SK-N-SH (cell line): ENCODE measurements at regions of chr5 and their contacts with region 1.

Region 1: GRCh38 chr5:56270568-56271392 is 37.6 kb upstream of the ANKRD55 start:
- DNase-seq: peak; percentile 72
- H3K4me3 ChIP-seq: no peak overlapping the region; a peak in 1 of 4 replicates
- H3K27ac ChIP-seq: peak overlapping the region; percentile 1 to 90; a peak in 3 of 4 replicates
- H3K4me1 ChIP-seq: peaks cover 10 to 24% of the 10 kb centered on the region in 2 experiments; a peak in 3 of 4 replicates
- H3K27me3 ChIP-seq: no peaks in the 10 kb centered on the region
- CTCF ChIP-seq: peak; percentile 99
- EP300 ChIP-seq: peak in 1 of 2 experiments; percentile 59; a peak in 2 of 4 replicates
- RAD21 ChIP-seq: peak; percentile 100

Region 2: DNA sequence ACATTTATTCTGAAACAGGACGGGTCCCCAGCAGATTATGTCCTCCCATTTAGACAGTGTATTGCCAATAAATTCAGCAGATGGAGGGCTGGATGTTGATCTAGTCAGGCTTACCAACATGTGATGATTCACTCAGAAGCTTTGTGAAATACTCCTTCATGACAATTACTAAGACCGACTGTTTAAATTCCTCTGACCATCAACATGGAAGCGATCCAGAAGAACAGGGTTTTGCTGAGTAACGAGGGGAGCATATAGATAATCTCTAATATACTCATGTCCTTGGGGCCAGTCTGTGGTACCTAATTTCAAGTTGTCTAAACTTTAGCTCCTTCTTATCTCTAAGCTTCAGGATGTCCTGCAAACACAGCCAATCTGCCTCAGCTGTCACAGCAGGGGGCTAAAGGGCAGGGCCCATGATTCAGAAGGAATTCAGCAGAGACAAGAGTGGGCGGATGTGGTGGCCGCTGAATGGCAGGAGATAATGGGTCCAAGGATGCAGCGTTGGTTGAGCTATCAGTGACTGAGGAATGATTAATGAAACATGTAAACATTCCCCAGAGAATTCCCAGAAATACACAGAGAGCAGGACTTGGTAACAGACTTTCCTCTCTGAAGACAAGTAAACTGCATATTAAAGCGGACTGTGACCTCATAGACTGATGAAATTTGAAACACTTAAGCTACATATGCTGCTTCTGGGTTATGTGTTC is 147.1 kb before region 1 on chr5:
- CTCF ChIA-PET with region 1: no interaction called
- POLR2A ChIA-PET with region 1: no interaction called
- DNase-seq: no peak
- H3K4me3 ChIP-seq: peak overlapping the region in 1 of 2 experiments; percentile 4; a peak in 1 of 4 replicates
- H3K27ac ChIP-seq: peak overlapping the region; percentile 67 to 97; a peak in 3 of 4 replicates
- H3K4me1 ChIP-seq: peaks cover 13 to 17% of the 10 kb centered on the region in 2 experiments; a peak in 3 of 4 replicates
- H3K27me3 ChIP-seq: no peaks in the 10 kb centered on the region
- CTCF ChIP-seq: no peak
- EP300 ChIP-seq: peak in 1 of 2 experiments; percentile 87; a peak in 2 of 4 replicates
- RAD21 ChIP-seq: no peak

Region 3: DNA sequence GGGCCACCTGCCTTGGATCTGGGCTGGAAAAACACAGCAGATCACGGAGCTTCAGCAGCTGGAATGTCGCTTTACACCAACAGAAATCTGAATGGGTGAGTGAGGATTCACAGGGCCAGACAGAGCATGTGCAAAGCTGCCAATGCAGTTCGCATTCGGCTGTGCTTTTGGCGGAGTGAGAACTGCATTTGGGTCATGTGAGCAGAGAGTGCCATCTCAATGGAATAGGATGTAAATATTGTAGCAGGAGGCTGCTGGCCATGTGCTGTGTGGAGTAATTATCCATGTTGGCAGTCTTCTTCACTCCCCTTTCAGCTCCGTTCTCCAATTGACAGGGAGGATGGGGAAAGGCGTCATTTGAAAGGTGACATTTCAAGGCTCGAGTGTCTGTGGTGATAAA is 37.5 kb before region 1 on chr5 and contains the start of gene ANKRD55:
- CTCF ChIA-PET with region 1: no interaction called
- POLR2A ChIA-PET with region 1: no interaction called
- DNase-seq: peak; percentile 30
- H3K4me3 ChIP-seq: no peak within 1 kb of the TSS
- H3K27ac ChIP-seq: no peak within 1 kb of the TSS
- H3K4me1 ChIP-seq: peaks cover 0 to 5% of the 10 kb centered on the region in 2 experiments; a peak in 1 of 4 replicates
- H3K27me3 ChIP-seq: 0 out of 2 replicates have a peak, but pooled peaks cover 5% of the 10 kb centered on the region
- CTCF ChIP-seq: no peak
- EP300 ChIP-seq: no peak
- RAD21 ChIP-seq: no peak
- polyA plus RNA-seq, gene ANKRD55: not detected in 2 replicates

Region 4: GRCh38 chr5:56282216-56282615 is 11.4 kb after region 1 on chr5:
- CTCF ChIA-PET with region 1: interaction called, 18 read pairs
- POLR2A ChIA-PET with region 1: no interaction called
- DNase-seq: no peak
- H3K4me3 ChIP-seq: no peak overlapping the region
- H3K27ac ChIP-seq: peak overlapping the region; percentile 4 to 14; a peak in 1 of 4 replicates
- H3K4me1 ChIP-seq: peaks cover 34 to 44% of the 10 kb centered on the region in 2 experiments
- H3K27me3 ChIP-seq: no peaks in the 10 kb centered on the region
- CTCF ChIP-seq: no peak
- EP300 ChIP-seq: no peak
- RAD21 ChIP-seq: no peak

Region 5: DNA sequence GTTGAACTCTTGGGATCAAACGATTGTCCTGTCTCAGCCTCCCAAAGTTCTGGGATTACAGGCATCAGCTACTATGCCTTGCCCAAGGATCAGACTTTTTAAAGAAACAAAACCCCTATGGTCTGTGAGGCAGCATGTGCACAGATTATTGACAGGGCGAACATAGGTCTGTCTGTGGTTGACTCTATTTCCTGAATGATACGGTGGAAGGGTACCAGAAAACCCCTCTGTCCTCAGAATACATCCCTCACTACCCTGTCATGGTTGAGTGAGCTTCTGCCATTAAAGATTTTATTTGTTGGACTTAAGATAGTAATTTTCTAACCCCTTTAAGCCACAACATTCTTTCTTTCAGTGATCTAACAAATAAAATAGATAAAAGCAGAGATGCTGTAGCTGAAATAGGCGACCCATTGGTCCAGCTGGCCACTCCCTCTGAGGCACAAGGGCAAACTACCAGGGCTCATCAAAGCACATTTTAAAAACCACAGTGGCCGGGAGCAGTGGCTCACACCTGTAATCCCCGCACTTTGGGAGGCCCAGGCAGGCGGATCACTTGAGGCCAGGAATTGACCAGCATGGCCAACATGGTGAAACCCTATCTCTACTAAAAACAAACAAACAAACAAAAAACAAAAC is 47.3 kb after region 1 on chr5:
- CTCF ChIA-PET with region 1: interaction called, 11 read pairs
- POLR2A ChIA-PET with region 1: no interaction called
- DNase-seq: no peak
- H3K4me3 ChIP-seq: no peak overlapping the region
- H3K27ac ChIP-seq: no peak overlapping the region
- H3K4me1 ChIP-seq: peaks cover 7 to 10% of the 10 kb centered on the region in 2 experiments; a peak in 2 of 4 replicates
- H3K27me3 ChIP-seq: no peaks in the 10 kb centered on the region
- CTCF ChIP-seq: no peak
- EP300 ChIP-seq: no peak
- RAD21 ChIP-seq: no peak

Region 6: GRCh38 chr5:56712895-56713591 is 442.3 kb after region 1 on chr5:
- CTCF ChIA-PET with region 1: interaction called, 10 read pairs
- POLR2A ChIA-PET with region 1: interaction called, 5 read pairs
- DNase-seq: peak; percentile 75
- H3K4me3 ChIP-seq: no peak overlapping the region
- H3K27ac ChIP-seq: peak overlapping the region in 1 of 2 experiments; percentile 99; a peak in 2 of 4 replicates
- H3K4me1 ChIP-seq: peaks cover 0 to 37% of the 10 kb centered on the region in 2 experiments; a peak in 2 of 4 replicates
- H3K27me3 ChIP-seq: no peaks in the 10 kb centered on the region
- CTCF ChIP-seq: no peak
- EP300 ChIP-seq: peak in 1 of 2 experiments; percentile 97; a peak in 2 of 4 replicates
- RAD21 ChIP-seq: peak; percentile 44

Region 7: GRCh38 chr5:56827049-56827448 is 556.3 kb after region 1 on chr5:
- CTCF ChIA-PET with region 1: interaction called, 17 read pairs
- POLR2A ChIA-PET with region 1: interaction called, 4 read pairs
- DNase-seq: no peak
- H3K4me3 ChIP-seq: no peak overlapping the region
- H3K27ac ChIP-seq: peak overlapping the region in 1 of 2 experiments; percentile 53; a peak in 2 of 4 replicates
- H3K4me1 ChIP-seq: peaks cover 0 to 70% of the 10 kb centered on the region in 2 experiments; a peak in 3 of 4 replicates
- H3K27me3 ChIP-seq: no peaks in the 10 kb centered on the region
- CTCF ChIP-seq: peak; percentile 34
- EP300 ChIP-seq: no peak
- RAD21 ChIP-seq: peak; percentile 32; the same call in 1 of the 2 replicates

Region 8: DNA sequence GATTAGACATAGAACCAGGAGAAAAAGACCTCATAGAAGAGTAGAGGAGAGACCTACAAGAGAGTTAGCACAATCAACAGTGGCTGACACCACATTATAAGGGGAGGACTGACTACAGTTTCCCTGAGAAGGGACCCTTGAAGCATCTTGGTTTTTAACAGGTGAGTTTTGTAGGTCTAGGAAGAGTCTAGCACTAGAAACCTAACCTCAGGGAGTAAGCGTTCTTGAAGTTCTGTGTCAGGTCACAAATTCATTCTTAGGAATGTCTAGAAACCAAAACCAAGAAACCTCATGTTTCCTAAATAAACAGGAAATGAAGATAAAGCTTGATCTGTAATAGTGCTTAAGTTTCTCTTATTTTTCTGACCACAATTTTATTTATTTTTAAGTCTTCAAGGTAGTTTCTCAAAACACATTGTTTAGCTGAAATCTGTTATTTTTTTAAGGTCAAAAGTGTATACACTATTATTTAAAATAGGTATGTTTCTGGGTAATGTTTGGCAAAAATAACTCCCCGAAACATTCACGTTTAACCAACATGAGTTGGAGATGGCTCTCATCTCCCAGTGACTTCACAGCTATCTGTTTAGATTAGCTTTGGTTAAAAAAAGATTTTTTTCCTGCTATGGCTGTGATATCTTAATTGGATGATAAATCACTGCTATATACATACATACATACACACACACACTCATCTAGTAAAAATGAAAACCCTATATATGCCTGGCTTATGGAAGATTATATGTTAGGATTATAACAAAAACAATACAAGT is 581.6 kb after region 1 on chr5:
- CTCF ChIA-PET with region 1: interaction called, 10 read pairs
- POLR2A ChIA-PET with region 1: no interaction called
- DNase-seq: no peak
- H3K4me3 ChIP-seq: no peak overlapping the region
- H3K27ac ChIP-seq: peak overlapping the region in 1 of 2 experiments; percentile 43; a peak in 2 of 4 replicates
- H3K4me1 ChIP-seq: peaks cover 17 to 32% of the 10 kb centered on the region in 2 experiments
- H3K27me3 ChIP-seq: no peaks in the 10 kb centered on the region
- CTCF ChIP-seq: no peak
- EP300 ChIP-seq: no peak
- RAD21 ChIP-seq: no peak